AG04450 (cell line): ENCODE measurements at regions of chr15 and their contacts with region 1.

Region 1: DNA sequence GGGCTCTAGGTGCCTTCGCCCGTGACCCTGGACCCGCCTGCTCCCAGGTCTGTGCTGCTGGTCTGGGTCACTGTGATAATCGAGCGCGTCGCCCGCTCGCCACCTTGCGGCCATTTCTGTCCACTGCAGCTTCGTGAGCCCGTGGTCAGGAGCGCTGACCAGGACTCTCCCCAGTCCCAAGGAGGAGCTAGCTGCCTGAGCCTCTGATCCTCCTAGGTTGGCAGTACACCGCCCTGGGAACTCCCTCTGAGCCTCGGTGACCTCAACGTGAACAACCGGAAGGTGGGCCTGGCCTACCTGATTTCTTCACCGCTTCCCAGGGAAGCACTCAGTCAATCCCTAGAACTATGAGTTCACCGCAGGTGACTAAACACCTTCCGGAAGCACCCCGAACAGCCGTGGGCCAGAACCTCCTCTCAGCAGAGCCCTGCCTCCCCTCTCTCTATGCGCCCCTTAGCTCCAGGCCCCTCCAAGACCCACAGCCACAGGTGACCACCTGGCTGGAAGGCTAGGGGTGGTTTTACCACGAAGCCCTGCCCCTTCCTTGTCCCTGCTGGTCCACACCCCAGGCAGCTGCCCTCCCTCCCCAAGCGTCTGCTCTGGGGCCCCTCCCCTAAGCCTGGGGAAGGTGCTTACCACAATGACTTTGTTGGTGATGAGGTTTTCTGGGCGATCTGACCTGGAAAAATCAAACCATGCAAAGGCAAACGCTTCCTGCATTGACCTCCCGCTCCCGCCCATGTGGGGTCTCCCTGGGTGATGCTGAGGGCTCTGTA is 9.7 kb downstream of the PLA2G4D start:
- DNase-seq: peak; percentile 3
- H3K4me3 ChIP-seq: no peak overlapping the region
- H3K27ac ChIP-seq: no peak overlapping the region
- H3K27me3 ChIP-seq: peaks cover 58% of the 10 kb centered on the region
- CTCF ChIP-seq: peak; percentile 90

Region 2: GRCh38 chr15:41989259-41989933 is 95.3 kb before region 1 on chr15:
- CTCF ChIA-PET with region 1: interaction called, 81 read pairs
- POLR2A ChIA-PET with region 1: no interaction called
- DNase-seq: peak; percentile 34
- H3K4me3 ChIP-seq: no peak overlapping the region
- H3K27ac ChIP-seq: no peak overlapping the region
- H3K27me3 ChIP-seq: peaks cover 28% of the 10 kb centered on the region
- CTCF ChIP-seq: peak; percentile 97

Region 3: DNA sequence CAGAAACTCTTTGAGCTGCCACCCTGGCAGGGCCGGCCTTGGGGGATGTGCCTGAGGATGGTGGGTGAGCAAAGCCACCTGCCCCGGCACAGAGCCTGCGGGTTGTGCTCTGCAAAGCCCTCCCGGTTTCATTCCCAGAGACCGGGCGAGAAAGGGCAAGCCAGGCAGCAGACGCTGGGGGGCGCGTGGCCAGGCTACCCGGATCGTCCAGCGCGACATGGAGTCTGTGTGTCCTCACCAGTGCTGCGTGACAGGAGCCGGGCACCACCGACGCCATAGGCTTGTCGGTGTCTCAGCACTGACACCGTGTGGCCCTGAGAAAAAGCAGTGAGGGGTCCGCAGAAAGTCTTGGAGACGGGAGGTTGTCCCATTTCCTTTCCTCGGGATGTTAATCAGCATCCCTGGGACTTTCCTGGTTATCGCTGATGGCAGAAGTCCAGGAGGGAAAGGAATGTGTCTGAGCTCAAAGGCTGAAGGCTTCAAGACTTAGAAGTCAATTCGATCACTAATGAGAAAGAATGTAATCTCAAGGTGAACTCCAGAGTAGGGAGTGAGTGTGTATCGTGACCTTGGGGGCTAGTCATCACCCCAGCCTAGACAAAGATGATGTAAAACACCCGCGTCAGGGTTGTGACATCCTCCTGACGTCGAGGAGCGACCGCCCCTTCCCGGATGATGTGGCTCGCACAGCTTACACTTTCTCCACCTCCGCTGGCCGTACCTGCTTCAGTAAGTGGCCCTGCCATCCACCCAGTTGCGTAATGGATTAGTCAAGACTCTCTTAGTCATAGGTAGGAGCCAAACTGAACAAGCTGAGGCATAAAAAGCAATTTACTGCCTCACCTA is 27.5 kb before region 1 on chr15:
- CTCF ChIA-PET with region 1: interaction called, 29 read pairs
- POLR2A ChIA-PET with region 1: no interaction called
- DNase-seq: no peak
- H3K4me3 ChIP-seq: peak overlapping the region; percentile 36
- H3K27ac ChIP-seq: no peak overlapping the region
- H3K27me3 ChIP-seq: peaks cover 46% of the 10 kb centered on the region
- CTCF ChIP-seq: peak; percentile 56

Region 4: DNA sequence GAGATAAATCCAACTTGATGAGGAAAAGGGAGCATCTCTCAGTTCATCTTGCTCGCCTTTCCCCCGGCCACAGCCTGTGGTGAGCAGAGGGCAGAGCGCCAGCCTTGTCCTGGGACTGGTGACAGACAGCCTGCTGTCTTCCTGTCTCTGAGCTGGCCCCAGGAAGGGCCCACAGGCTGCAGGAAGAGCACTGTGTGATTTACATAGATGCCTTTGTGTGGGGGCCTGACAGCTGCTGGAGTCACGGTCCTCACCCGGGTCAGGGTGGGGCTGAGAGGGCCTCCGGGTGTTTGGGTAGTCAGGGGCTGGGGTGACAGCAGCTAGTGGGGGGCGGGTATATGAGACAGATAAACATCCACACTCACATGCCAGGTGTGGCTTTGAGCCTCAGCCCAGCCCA is 19.6 kb before region 1 on chr15:
- CTCF ChIA-PET with region 1: interaction called, 25 read pairs
- POLR2A ChIA-PET with region 1: no interaction called
- DNase-seq: no peak
- H3K4me3 ChIP-seq: no peak overlapping the region
- H3K27ac ChIP-seq: no peak overlapping the region
- H3K27me3 ChIP-seq: peaks cover 33% of the 10 kb centered on the region
- CTCF ChIP-seq: no peak

Region 5: DNA sequence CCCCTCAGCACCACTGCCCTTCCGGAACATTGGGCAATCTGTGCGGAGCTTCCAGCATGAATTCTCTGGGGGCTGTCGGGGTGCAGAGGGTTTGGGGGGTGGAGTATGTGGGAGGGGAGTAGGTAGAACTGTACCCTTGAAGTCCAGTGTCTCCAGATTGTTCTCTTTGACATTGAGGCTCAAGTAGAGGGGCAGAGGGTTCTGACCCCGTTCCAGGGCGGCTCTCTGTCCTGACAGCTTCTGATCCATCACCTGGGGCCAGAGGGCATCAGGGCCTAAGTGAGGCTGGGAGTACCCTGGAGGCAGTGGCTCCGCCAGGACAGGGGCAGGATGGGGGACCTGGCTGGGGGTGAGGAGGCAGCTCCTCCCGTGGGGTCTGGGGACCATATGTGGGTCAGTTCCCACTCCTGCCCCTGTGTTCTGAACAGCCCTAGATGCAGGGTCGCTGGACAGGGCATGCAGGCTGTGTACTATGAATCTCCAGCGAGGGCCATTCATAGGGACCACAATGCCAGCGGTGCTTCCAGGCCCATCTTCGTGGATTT is 12.4 kb before region 1 on chr15:
- CTCF ChIA-PET with region 1: interaction called, 18 read pairs
- POLR2A ChIA-PET with region 1: no interaction called
- DNase-seq: no peak
- H3K4me3 ChIP-seq: no peak overlapping the region
- H3K27ac ChIP-seq: no peak overlapping the region
- H3K27me3 ChIP-seq: peaks cover 24% of the 10 kb centered on the region
- CTCF ChIP-seq: no peak

Region 6: DNA sequence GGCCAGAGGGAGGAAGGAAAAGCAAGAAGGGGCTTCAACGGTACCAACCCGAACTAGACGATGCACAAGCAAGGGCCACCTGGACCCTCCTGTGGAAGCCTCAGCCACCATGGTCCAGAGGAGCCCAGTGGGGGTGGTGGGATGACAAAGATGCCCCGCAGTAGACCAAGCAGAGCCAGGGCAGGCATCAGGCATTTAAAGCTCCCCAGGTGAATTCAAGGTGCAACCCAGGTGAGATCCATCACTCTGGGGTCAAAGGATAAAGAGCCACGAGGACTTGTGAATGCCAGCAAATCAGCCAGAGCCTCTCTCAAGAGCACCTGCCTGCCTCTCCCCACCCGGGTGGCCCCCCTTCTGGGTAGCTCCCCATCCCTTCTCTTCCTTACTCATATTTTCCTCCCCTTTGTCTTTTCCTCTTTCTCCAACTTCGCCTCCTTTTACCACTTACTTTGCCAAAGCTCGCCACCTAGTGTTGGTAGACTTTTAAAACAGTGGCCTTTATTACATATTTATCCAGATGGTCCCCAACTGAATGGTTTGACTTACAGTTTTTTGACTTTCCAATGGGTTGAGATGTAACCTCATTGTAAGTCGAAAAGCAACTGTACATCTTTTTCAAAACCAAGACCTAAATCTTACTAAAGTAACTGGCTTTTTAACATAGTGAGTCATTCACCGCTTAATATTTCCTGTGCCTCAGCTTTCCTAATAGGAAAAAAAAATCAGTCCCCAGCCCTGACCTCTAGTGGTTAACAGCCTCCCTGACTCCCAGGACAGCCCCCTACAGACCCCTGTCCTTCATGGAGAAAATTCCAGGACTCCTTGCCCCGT is 53.0 kb after region 1 on chr15:
- CTCF ChIA-PET with region 1: interaction called, 18 read pairs
- POLR2A ChIA-PET with region 1: no interaction called
- DNase-seq: no peak
- H3K4me3 ChIP-seq: no peak overlapping the region
- H3K27ac ChIP-seq: no peak overlapping the region
- H3K27me3 ChIP-seq: peaks cover 32% of the 10 kb centered on the region
- CTCF ChIP-seq: peak; percentile 69

Region 7: GRCh38 chr15:42171122-42171521 is 86.5 kb after region 1 on chr15:
- CTCF ChIA-PET with region 1: no interaction called
- POLR2A ChIA-PET with region 1: no interaction called
- DNase-seq: no peak
- H3K4me3 ChIP-seq: no peak overlapping the region
- H3K27ac ChIP-seq: no peak overlapping the region
- H3K27me3 ChIP-seq: no peaks in the 10 kb centered on the region
- CTCF ChIP-seq: no peak